Activated naive CD4-positive, alpha-beta T cell treated with anti-CD3 and anti-CD28 coated beads for 36 hours (primary cell): ENCODE measurements at regions of chr19 and their contacts with region 1.

Region 1: DNA sequence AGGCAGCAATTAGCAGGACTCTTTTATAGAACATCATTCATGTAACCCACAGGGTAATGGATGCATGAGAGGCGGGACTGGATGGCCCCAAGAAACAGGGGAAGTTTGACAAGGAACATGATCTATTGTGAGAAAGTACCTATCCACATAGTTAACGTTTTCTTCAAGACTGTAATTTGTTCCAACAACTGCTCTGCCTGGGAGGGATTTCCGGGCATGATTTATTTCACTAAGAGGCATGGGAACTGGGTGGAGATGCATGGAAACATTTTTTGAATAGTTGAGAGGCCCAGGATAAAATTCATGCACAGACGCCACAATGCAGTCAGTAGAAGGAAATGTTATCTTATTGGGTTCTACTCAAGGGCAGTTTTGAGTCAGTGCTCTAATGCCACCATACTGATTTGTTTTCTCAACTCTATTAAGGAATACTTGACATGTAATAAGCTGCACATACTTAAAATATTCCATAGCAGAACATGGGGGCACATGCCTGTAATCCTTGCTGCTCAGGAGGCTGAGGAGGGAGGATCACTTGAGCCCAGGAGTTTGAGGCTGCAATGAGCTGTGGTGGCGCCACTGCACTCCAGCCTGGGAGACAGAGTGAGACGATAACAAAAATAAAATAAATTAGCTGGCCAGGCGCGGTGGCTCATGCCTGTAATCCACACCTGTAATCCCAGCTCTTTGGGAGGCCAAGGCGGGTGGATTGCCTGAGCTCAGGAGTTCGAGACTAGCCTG is 9.9 kb upstream of the ATG4D start:
- DNase-seq: no peak
- H3K4me3 Mint-ChIP-seq: no peak overlapping the region
- H3K27ac Mint-ChIP-seq: no peak overlapping the region
- H3K4me1 Mint-ChIP-seq: peaks cover under 1% of the 10 kb centered on the region
- H3K27me3 Mint-ChIP-seq: peaks cover 12% of the 10 kb centered on the region

Region 2: GRCh38 chr19:10245189-10245939 is 288.5 kb before region 1 on chr19:
- CTCF ChIA-PET with region 1: no interaction called
- intact Hi-C with region 1: no loop called
- DNase-seq: no peak
- H3K4me3 Mint-ChIP-seq: no peak overlapping the region
- H3K27ac Mint-ChIP-seq: no peak overlapping the region
- H3K4me1 Mint-ChIP-seq: peaks cover 3% of the 10 kb centered on the region
- H3K27me3 Mint-ChIP-seq: no peaks in the 10 kb centered on the region

Region 3: DNA sequence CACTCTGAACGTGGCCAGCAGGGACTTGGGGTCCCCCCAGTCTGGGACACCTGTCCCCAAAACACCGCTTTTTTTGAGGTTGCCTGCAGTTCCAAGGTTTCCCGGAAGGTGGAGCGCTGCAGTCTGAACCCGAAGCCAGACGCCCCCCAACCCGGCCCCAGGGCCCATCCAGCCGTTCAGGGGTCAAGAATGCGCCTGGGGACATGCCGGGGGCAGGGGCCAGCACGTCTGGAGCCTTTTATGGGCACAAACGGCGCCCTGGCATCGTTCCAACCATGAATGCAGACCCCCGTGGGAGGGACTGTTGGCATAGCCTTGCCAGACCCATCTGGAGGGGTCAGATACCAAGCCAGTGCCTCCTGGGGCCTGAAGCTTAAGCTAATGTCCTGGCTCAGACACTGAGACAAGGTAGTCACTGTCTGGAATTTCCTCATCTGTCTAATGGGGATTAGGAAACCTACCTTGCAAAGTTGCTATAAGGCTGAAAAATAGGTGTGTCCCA is 23.5 kb before region 1 on chr19:
- CTCF ChIA-PET with region 1: interaction called, 10 read pairs
- intact Hi-C with region 1: no loop called
- DNase-seq: peak; percentile 74
- H3K4me3 Mint-ChIP-seq: no peak overlapping the region
- H3K27ac Mint-ChIP-seq: no peak overlapping the region
- H3K4me1 Mint-ChIP-seq: peaks cover 16% of the 10 kb centered on the region
- H3K27me3 Mint-ChIP-seq: peaks cover 25% of the 10 kb centered on the region